Activated CD4-positive, alpha-beta memory T cell treated with anti-CD3 and anti-CD28 coated beads for 36 hours (primary cell): ENCODE measurements at regions of chr19 and their contacts with region 1.

Region 1: DNA sequence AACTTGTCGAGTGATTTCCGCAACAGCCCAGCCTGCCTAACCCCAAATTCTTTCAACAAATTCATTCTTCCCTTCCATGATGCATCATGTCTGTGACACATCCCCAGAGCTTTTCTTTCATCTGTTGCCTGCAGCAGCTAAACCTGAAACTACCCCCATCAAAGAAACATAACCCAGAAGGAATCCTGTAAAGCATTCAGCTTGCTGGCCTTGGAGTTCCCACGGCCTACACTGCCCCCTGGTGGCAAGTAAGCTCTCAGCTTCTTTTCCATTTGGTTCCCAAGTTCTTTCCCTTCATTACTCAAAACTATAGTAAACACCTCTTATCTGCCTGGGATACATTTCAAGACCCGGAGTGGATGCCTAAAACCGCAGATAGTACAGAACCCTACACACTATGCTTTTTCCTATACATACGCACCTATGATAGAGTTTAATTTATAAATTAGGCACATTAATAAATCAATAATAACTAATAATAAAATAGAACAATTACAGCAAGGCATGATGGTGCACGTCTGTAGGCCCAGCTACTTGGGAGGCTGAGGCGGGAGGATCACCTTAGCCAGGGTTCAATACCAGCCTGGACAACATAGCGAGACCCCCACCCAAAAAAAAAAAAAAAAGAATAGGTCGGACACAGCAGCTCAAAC is 7.4 kb downstream of the ETHE1 start:
- DNase-seq: peak; percentile 86
- H3K4me3 Mint-ChIP-seq: no peak overlapping the region
- H3K27ac Mint-ChIP-seq: peak overlapping the region; percentile 64
- H3K4me1 Mint-ChIP-seq: peaks cover 20% of the 10 kb centered on the region
- H3K27me3 Mint-ChIP-seq: no peaks in the 10 kb centered on the region

Region 2: DNA sequence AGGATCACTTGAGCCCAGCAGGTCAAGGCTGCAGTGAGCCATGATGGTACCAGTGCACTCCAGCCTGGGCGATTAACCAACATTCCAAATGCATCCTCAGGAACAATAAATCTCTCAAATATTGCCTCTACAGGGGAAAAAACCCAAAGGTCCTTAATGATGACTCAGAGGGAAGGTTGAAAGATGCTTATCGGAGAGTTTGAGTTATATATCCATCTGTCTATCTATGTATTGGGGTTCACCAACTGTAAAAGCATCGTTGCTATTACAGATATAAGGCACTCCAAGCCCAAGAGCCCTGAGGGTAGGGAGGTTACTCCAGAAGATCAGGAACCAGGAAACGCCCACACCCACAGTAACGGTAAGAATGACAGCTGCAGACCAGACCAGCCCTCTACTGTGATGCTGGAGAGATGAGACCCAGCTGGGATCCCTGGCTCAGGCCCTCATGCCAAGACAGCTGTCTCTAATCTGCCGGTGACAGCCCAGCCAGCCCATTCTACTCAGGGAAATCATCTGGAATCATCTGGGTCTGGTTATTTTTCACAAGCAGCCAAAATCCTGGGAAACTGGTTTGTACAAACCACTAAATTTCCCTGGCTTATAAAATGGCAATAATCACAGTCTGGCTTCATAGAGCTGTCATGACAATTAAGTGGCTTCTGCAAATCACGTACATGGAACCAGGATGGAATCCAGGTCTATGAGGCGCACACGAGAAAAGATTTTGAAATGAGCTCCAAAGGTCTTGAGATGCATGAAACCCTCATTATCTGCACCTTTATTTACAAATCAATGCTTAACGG is 81.1 kb before region 1 on chr19:
- CTCF ChIA-PET with region 1: interaction called, 320 read pairs
- POLR2A ChIA-PET with region 1: interaction called, 5 read pairs
- intact Hi-C with region 1: loop called (anchors 2 kb)
- DNase-seq: peak; percentile 51
- H3K4me3 Mint-ChIP-seq: no peak overlapping the region
- H3K27ac Mint-ChIP-seq: peak overlapping the region; percentile 71
- H3K4me1 Mint-ChIP-seq: peaks cover 34% of the 10 kb centered on the region
- H3K27me3 Mint-ChIP-seq: no peaks in the 10 kb centered on the region

Region 3: DNA sequence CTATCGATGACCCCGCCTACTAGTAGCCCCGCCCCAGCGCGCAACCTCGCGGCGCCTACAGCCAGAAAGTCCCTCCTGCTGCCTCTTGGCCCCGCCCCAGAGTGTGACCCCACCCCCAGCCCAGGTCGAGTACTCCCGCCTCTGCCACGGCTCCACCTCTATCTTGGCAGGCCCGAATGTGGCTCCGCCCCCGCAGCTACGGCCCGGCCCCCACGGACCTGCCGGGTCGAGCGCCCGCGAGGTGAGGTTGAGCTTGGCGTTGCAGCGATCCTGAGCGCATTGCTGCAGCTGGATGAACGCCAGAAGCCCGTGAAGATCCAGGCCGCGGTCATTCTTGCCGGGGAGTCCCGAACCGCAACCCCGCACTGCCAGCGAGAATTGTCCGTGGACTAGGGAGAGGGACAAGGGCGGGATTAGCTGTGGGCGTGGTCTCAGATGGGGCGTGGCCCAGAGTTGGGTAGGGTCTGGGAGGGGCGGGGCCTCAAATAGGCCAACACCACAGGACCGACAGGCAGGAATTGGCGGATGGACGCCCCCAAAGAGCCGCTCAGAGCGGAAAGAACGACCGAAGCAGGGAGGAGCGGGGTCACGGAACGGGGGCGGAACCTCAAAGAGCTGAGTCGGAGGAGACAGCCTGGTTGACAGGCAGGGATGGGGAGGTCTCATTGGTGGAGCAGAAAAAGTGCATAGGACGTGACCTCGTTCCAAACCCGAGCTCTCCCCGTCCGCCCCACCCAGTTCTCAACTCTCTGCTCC is 56.0 kb before region 1 on chr19:
- CTCF ChIA-PET with region 1: interaction called, 25 read pairs
- POLR2A ChIA-PET with region 1: interaction called, 5 read pairs
- intact Hi-C with region 1: loop called (anchors 1 kb)
- DNase-seq: peak; percentile 100
- H3K4me3 Mint-ChIP-seq: peak overlapping the region; percentile 90
- H3K27ac Mint-ChIP-seq: peak overlapping the region; percentile 82
- H3K4me1 Mint-ChIP-seq: peaks cover 41% of the 10 kb centered on the region
- H3K27me3 Mint-ChIP-seq: no peaks in the 10 kb centered on the region

Region 4: GRCh38 chr19:43503501-43504425 is 15.8 kb before region 1 on chr19:
- CTCF ChIA-PET with region 1: interaction called, 30 read pairs
- POLR2A ChIA-PET with region 1: interaction called, 7 read pairs
- intact Hi-C with region 1: no loop called
- DNase-seq: peak; percentile 99
- H3K4me3 Mint-ChIP-seq: peak overlapping the region; percentile 94
- H3K27ac Mint-ChIP-seq: peak overlapping the region; percentile 95
- H3K4me1 Mint-ChIP-seq: peaks cover 23% of the 10 kb centered on the region
- H3K27me3 Mint-ChIP-seq: no peaks in the 10 kb centered on the region

Region 5: DNA sequence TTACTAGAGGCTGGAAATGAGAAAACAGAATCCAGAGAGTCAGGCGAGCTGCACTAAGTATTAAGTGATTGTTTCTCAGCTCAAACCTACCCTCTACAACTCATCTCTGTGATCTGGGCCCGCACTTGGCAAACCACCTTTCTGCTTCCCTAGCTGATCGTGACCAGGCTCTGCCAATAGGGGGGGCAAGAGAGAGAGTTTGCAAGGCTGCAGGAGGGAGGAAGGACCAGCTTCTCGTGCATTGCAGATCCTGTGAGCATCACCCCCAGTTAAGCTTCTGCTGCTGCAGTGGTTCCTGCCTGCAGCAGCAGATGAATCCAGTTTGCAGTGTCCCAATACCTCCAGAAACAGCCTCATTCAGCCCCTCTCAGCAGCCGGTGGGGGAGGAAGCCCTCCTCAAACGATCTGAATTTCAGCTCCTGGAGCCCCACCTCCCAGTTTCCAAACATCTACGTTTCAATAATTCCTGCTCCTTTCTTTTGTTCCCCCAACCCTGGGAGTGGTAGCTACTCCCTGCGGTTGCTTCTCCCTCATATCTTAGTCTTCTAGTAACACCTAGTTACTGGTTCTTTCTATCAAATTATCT is 35.7 kb after region 1 on chr19:
- CTCF ChIA-PET with region 1: interaction called, 24 read pairs
- POLR2A ChIA-PET with region 1: no interaction called
- intact Hi-C with region 1: no loop called
- DNase-seq: peak; percentile 87
- H3K4me3 Mint-ChIP-seq: no peak overlapping the region
- H3K27ac Mint-ChIP-seq: peak overlapping the region; percentile 38
- H3K4me1 Mint-ChIP-seq: peaks cover 9% of the 10 kb centered on the region
- H3K27me3 Mint-ChIP-seq: no peaks in the 10 kb centered on the region